ENCODE measurements at regions of chr11 and their contacts with region 1.

Region 1: GRCh38 chr11:67507864-67508485 is at the start of gene CDK2AP2:
- DNase-seq: peak; percentile 99 to 100 (median 100)
- H3K4me3 ChIP-seq: peak within 1 kb of the TSS in 3 of 4 donors; percentile 35 to 77 (median 45)
- H3K27ac ChIP-seq: peak within 1 kb of the TSS; percentile 89 to 99 (median 96)
- H3K4me1 ChIP-seq: peaks cover 27 to 43% of the 10 kb centered on the region in 2 donors
- H3K27me3 ChIP-seq: no peaks in the 10 kb centered on the region
- CTCF ChIP-seq: peak in 1 of 6 experiments; percentile 19
- POLR2A ChIP-seq: peak; percentile 78 to 82
- total RNA-seq, gene CDK2AP2: 34.0 to 218 (median 50.4) TPM

Region 2: DNA sequence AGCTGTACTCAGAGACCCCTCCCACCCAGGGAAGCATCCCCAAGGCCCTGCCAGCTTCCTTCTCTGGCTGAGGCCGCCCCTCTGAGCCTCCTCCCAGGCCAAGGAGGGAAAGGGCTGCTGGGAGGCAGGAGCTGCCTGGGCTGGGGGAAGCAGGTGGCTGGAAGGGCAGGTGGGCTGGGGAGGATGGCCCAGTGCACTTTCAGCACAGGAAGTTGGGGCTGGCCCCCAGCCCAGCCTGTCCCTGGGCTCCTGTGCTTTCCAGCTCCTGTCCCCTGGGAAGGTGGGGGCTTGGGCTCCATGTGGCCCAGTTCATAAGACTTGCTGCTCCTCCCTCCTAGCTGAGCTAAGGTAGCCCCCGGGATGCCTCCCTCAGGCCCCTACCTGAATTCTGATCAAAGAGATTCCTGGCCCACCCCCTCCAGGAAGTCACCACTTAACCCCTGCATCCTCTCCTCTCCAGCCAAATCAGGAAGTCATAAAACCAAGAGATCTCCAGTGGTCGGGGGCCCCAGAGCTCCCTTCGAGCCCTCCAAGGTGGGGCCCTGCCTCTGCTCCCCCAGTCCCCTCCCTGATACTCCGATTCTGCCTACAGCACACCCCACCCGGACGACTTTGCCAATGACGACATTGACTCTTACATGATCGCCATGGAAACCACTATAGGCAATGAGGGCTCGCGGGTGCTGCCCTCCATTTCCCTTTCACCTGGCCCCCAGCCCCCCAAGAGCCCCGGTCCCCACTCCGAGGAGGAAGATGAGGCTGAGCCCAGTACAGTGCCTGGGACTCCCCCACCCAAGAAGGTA is 111.2 kb before region 1 on chr11:
- intact Hi-C with region 1: loop called in 1 of 2 experiments (anchors 5 kb)
- DNase-seq: no peak
- H3K4me3 ChIP-seq: no peak overlapping the region
- H3K27ac ChIP-seq: peak overlapping the region in 1 of 5 donors; percentile 46
- H3K4me1 ChIP-seq: peaks cover 29 to 46% of the 10 kb centered on the region in 2 donors
- H3K27me3 ChIP-seq: no peaks in the 10 kb centered on the region
- CTCF ChIP-seq: no peak
- POLR2A ChIP-seq: no peak

Region 3: DNA sequence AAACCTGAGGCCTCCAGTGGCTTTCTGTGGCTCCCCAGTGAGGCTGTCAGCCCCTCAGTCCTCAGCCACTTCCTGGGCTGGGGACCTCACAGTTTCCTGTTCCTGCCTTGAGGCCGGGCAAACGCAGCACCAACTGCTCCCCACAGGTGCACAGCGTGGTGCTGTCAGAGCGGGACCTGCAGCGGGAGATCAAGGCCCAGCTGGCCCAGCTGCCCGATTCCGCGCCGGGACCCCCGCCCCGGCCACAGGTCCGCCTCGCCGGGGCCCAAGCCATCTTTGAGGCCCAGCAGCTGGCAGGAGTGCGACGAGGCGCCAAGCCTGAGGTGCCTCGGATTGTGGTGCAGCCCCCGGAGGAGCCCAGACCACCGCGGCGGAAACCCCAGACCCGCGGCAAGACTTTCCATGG is 98.7 kb before region 1 on chr11:
- intact Hi-C with region 1: loop called in 1 of 2 experiments (anchors 5 kb)
- DNase-seq: no peak
- H3K4me3 ChIP-seq: no peak overlapping the region
- H3K27ac ChIP-seq: no peak overlapping the region
- H3K4me1 ChIP-seq: peaks cover 0 to 4% of the 10 kb centered on the region in 2 donors
- H3K27me3 ChIP-seq: peaks cover 36% of the 10 kb centered on the region
- CTCF ChIP-seq: no peak
- POLR2A ChIP-seq: no peak